ENCODE measurements at regions of chr7 and their contacts with region 1.

Region 1: GRCh38 chr7:116271963-116272839 is 61.9 kb downstream of the TES start:
- DNase-seq: peak; percentile 81 to 84
- H3K4me3 ChIP-seq: no peak overlapping the region
- H3K27ac ChIP-seq: peak overlapping the region; percentile 85 to 88 (median 86)
- H3K4me1 ChIP-seq: peaks cover 24 to 34% of the 10 kb centered on the region in 2 donors
- H3K27me3 ChIP-seq: no peaks in the 10 kb centered on the region
- CTCF ChIP-seq: no peak
- POLR2A ChIP-seq: peak in 1 of 2 donors; percentile 46

Region 2: DNA sequence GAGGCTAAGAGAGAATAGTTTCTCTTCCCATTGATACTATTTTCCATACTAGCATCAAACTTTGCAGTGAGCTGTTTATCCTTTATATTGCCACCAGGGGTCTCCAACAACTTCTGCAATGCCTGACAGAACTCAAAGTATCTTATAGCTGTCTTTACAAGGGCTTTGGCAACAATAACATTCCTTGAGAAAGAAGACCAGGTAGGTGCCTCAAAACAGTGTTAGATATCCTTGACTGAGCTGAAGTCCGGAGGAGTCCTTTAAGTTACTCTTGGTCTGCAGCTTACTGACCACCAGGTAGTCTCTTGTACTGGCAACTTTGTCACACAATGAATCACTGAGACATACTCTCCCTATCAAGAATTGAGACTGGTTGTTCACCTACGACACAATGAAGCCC is 91.9 kb before region 1 on chr7:
- intact Hi-C with region 1: no loop called
- DNase-seq: no peak
- H3K4me3 ChIP-seq: no peak overlapping the region
- H3K27ac ChIP-seq: peak overlapping the region in 1 of 3 donors; percentile 5
- H3K4me1 ChIP-seq: no peaks in the 10 kb centered on the region
- H3K27me3 ChIP-seq: no peaks in the 10 kb centered on the region
- CTCF ChIP-seq: peak; percentile 54 to 93 (median 80)
- POLR2A ChIP-seq: no peak

Region 3: DNA sequence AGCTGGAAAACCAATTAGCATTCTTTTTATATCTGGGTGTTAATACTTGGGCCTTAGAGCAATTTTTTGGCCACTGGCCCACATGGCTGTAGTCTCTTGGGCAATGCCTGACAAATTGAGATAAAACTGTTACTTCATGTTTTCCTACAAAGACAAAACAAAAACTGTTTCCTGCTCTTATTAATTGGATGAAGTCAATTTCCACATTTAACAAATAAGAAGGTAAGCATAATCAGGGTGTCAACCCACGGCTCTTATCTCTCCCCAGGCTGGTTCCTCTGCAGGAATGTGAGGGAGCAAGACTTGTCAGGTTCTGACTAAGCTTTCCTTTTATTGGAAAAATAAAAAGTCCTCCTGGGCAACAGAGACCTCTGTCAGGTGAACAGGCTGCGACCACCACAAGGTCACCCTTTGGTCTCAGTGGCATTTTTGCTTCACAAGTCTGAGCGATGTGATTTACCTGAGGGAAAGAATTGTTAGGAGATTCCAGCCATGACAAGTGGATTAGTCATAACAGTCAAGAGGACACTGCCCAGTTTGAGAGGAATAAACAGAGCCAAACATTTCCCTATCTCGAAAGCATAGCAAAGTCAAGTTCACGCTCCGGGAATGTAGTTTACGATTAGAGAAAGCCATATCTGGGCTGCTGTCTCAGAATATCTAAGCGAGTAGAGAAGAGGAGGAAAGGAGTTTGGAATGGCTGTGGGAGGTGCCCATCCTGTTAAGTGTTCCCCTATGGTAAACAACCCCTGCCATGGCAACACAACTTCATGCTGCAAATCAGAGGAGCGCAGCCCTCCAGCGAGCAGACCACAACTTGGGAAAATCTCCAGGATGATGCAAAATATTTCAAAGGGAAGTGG is 82.6 kb after region 1 on chr7:
- intact Hi-C with region 1: loop called (anchors 10 kb)
- DNase-seq: peak; percentile 67 to 75
- H3K4me3 ChIP-seq: no peak overlapping the region
- H3K27ac ChIP-seq: peak overlapping the region; percentile 93 to 97 (median 96)
- H3K4me1 ChIP-seq: peaks cover 56% of the 10 kb centered on the region in 2 donors
- H3K27me3 ChIP-seq: no peaks in the 10 kb centered on the region
- CTCF ChIP-seq: no peak
- POLR2A ChIP-seq: peak in 1 of 2 donors; percentile 56

Region 4: GRCh38 chr7:116525913-116526861 is 254.0 kb after region 1 on chr7:
- intact Hi-C with region 1: loop called (anchors 5 kb)
- DNase-seq: peak; percentile 89 to 92
- H3K4me3 ChIP-seq: peak overlapping the region; percentile 65 to 95 (median 69)
- H3K27ac ChIP-seq: peak overlapping the region; percentile 96 to 99 (median 97)
- H3K4me1 ChIP-seq: peaks cover 33 to 49% of the 10 kb centered on the region in 2 donors
- H3K27me3 ChIP-seq: no peaks in the 10 kb centered on the region
- CTCF ChIP-seq: peak; percentile 42 to 95 (median 87)
- POLR2A ChIP-seq: peak; percentile 60 to 87

Measured in thyroid gland (tissue), 4 donors.